K562 (cell line): ENCODE measurements at regions of chr3 and their contacts with region 1.

Region 1: DNA sequence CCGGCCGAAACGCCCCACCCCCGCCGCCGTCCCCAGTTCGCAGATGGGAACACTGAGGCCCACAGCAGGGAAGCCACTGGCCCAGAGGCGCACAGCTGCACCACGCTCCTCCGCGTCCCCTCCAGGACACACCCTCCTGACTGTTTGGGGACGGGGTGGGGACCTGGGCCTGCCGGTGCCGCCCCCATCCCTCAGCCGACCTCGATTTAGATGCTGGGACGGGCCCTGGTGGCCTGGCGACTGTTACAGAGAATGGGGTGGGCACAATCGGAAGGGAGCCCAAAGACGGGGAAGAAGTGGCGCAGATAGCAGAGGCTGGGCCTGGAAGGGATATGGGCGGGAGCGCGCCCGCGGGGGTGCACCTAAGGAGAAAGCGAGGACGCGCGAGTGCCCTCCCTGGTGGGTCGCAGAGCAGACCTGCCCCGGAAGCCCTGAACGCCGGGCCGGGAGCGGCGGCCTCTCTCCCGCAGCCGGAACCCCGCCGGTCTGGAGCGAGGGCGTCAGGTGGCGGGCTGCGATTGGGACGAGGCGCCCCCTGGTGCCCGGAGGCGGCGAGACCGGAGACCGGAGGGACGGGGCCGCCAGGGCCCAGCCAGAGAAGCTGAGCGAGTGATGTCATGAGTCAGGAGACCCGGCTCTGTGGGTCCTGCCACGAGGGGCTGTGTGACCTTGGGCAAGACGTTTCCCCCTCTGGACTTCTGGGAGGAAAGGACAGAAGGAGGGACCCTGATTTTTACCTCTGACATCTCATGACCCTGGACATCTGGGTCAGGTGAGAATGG is 78.4 kb downstream of the IQSEC1 start:
- DNase-seq: peak; percentile 94 to 97 (median 96)
- ATAC-seq: peak; percentile 83
- H3K4me3 ChIP-seq: peak overlapping the region; percentile 73
- H3K27ac ChIP-seq: peak overlapping the region; percentile 81
- H3K4me1 ChIP-seq: peaks cover 37 to 60% of the 10 kb centered on the region in 2 experiments
- H3K27me3 ChIP-seq: no peaks in the 10 kb centered on the region
- CTCF ChIP-seq: peak; percentile 92 to 97 (median 97)
- EP300 ChIP-seq: peak; percentile 65
- POLR2A ChIP-seq: peak; percentile 84
- RAD21 ChIP-seq: peak; percentile 74 to 88

Region 2: DNA sequence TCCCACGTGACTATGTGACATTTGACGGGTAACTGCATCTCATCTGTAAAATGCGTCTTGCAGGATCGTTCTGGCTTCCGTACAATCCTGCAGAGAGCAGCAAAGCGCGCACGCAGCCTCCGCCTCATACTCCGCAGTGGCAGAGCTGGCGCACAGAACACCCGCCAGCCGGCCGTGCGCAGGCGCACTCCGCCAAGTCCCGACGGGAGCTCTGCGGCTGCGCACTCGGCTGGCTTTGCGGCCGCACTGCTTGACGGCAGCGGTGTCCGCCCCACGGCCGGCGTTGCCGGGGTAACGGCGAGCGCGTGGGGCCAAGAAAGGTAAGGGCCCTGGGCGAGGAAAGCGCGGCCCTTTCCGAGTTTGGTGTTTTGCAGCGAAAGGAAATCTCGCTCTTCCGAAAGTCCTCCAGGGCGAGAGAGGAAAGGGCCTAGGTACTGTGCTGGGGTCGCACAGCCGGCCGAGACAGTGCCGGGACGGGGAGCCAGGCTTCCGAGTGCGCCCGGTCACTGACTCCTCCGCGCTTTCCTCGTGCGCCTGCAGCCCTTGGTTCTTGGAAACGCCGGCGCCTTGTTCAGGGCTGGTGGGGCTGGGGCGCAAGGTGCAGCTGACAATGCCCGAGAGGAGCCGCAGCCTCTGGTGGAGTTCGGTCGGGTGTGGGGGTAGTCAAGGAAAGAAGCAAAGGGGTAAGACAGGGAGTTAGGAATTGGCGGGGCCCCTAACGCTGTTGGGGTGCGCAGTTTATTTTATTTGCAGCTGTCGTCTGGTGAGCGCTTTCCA is 510.4 kb before region 1 on chr3 and contains the start of gene TSEN2:
- CTCF ChIA-PET with region 1: no interaction called
- POLR2A ChIA-PET with region 1: no interaction called
- in situ Hi-C with region 1: no loop called
- intact Hi-C with region 1: loop called (anchors 10 kb)
- DNase-seq: peak; percentile 98 to 100 (median 100)
- ATAC-seq: peak; percentile 96
- H3K4me3 ChIP-seq: peak within 1 kb of the TSS; percentile 82
- H3K27ac ChIP-seq: peak within 1 kb of the TSS; percentile 84
- H3K4me1 ChIP-seq: peaks cover 19 to 22% of the 10 kb centered on the region in 2 experiments
- H3K27me3 ChIP-seq: peaks cover 0 to 5% of the 10 kb centered on the region in 2 experiments; a peak in 2 of 5 replicates
- CTCF ChIP-seq: peak; percentile 46 to 57 (median 55)
- EP300 ChIP-seq: peak; percentile 6; the same call in 1 of the 2 replicates
- POLR2A ChIP-seq: peak; percentile 94
- RAD21 ChIP-seq: peak in 1 of 2 experiments; percentile 62; a peak in 3 of 4 replicates
- polyA plus RNA-seq, gene TSEN2: 39.3 to 76.3 TPM

Region 3: GRCh38 chr3:12508291-12508700 is 486.5 kb before region 1 on chr3:
- CTCF ChIA-PET with region 1: no interaction called
- POLR2A ChIA-PET with region 1: no interaction called
- in situ Hi-C with region 1: no loop called
- intact Hi-C with region 1: no loop called
- DNase-seq: no peak
- ATAC-seq: no peak
- H3K4me3 ChIP-seq: no peak overlapping the region
- H3K27ac ChIP-seq: no peak overlapping the region
- H3K4me1 ChIP-seq: no peaks in the 10 kb centered on the region; a peak in 1 of 5 replicates
- H3K27me3 ChIP-seq: no peaks in the 10 kb centered on the region
- CTCF ChIP-seq: no peak
- EP300 ChIP-seq: no peak
- POLR2A ChIP-seq: no peak
- RAD21 ChIP-seq: no peak

Region 4: GRCh38 chr3:12706504-12707253 is 288.1 kb before region 1 on chr3:
- CTCF ChIA-PET with region 1: no interaction called
- POLR2A ChIA-PET with region 1: no interaction called
- in situ Hi-C with region 1: no loop called
- intact Hi-C with region 1: loop called (anchors 10 kb)
- DNase-seq: peak; percentile 73 to 87 (median 80)
- ATAC-seq: peak; percentile 99
- H3K4me3 ChIP-seq: no peak overlapping the region
- H3K27ac ChIP-seq: no peak overlapping the region
- H3K4me1 ChIP-seq: no peaks in the 10 kb centered on the region
- H3K27me3 ChIP-seq: peaks cover 14 to 33% of the 10 kb centered on the region in 2 experiments
- CTCF ChIP-seq: peak; percentile 95 to 99 (median 99)
- EP300 ChIP-seq: no peak
- POLR2A ChIP-seq: no peak
- RAD21 ChIP-seq: peak; percentile 73 to 95

Region 5: GRCh38 chr3:12719984-12720898 is 274.6 kb before region 1 on chr3:
- CTCF ChIA-PET with region 1: no interaction called
- POLR2A ChIA-PET with region 1: no interaction called
- in situ Hi-C with region 1: no loop called
- intact Hi-C with region 1: no loop called
- DNase-seq: peak; percentile 86 to 89 (median 87)
- ATAC-seq: peak; percentile 89
- H3K4me3 ChIP-seq: no peak overlapping the region
- H3K27ac ChIP-seq: no peak overlapping the region
- H3K4me1 ChIP-seq: peaks cover 0 to 10% of the 10 kb centered on the region in 2 experiments; a peak in 3 of 5 replicates
- H3K27me3 ChIP-seq: no peaks in the 10 kb centered on the region; a peak in 1 of 5 replicates
- CTCF ChIP-seq: peak; percentile 90 to 99 (median 99)
- EP300 ChIP-seq: peak; percentile 48; the same call in 1 of the 2 replicates
- POLR2A ChIP-seq: no peak
- RAD21 ChIP-seq: peak; percentile 71 to 85

Region 6: GRCh38 chr3:12796171-12797123 is 198.4 kb before region 1 on chr3 and contains the start of gene CAND2:
- CTCF ChIA-PET with region 1: no interaction called
- POLR2A ChIA-PET with region 1: no interaction called
- in situ Hi-C with region 1: no loop called
- intact Hi-C with region 1: loop called (anchors 10 kb)
- DNase-seq: peak; percentile 78 to 87 (median 84)
- ATAC-seq: peak; percentile 96
- H3K4me3 ChIP-seq: peak within 1 kb of the TSS; percentile 73
- H3K27ac ChIP-seq: peak within 1 kb of the TSS; percentile 77
- H3K4me1 ChIP-seq: peaks cover 8 to 25% of the 10 kb centered on the region in 2 experiments; a peak in 3 of 5 replicates
- H3K27me3 ChIP-seq: no peaks in the 10 kb centered on the region
- CTCF ChIP-seq: no peak
- EP300 ChIP-seq: no peak
- POLR2A ChIP-seq: peak; percentile 82
- RAD21 ChIP-seq: no peak
- polyA plus RNA-seq, gene CAND2: 0.91 to 1.4 TPM

Region 7: DNA sequence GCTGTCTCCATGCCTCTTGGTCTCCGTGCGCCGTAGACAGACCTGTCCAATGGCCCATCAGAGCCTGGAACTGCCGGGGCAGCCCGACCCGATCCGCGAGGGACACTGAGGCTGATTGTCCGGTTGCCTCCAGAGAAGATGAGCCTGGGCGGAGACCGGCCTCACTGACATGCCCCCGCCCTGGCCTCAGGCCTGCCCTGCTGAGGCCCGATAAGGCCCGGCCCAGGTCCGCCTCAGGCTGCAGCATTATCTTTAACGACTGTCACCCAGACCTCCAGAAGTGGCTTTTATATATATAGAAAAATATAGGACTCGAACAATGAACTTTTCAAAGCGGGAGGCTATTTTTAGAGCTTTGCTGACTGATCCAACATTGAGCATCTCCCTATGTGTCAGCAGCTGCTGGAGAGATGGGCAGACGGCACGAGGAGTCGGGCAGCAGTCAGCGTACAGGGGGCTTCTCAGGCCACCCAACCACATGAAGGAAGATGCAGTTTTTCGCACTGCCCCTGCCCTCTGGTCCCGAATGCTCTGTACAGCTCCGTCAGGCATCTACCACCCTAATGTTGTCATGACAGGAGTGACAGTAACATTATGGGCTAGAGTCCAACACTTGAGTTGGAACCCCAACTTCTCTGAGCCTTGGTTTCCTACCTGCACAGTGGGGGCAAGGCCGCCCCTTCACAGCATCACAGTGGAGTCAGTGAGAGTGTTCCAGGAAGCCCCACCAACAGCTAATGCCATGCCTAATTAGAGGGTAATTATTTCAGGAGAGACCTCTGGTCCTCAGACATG is 41.4 kb before region 1 on chr3:
- CTCF ChIA-PET with region 1: no interaction called
- POLR2A ChIA-PET with region 1: interaction called, 4 read pairs
- in situ Hi-C with region 1: no loop called
- intact Hi-C with region 1: loop called (anchors 1 kb)
- DNase-seq: peak; percentile 95 to 99 (median 96)
- ATAC-seq: peak; percentile 94
- H3K4me3 ChIP-seq: peak overlapping the region; percentile 24
- H3K27ac ChIP-seq: peak overlapping the region; percentile 90
- H3K4me1 ChIP-seq: peaks cover 72 to 88% of the 10 kb centered on the region in 2 experiments
- H3K27me3 ChIP-seq: no peaks in the 10 kb centered on the region
- CTCF ChIP-seq: no peak
- EP300 ChIP-seq: peak; percentile 95
- POLR2A ChIP-seq: peak; percentile 73; the same call in 1 of the 2 replicates
- RAD21 ChIP-seq: no peak

Region 8: GRCh38 chr3:13012228-13012691 is 17.5 kb after region 1 on chr3:
- CTCF ChIA-PET with region 1: no interaction called
- POLR2A ChIA-PET with region 1: interaction called, 9 read pairs
- in situ Hi-C with region 1: no loop called
- intact Hi-C with region 1: loop called (anchors 2 kb)
- DNase-seq: no peak
- ATAC-seq: 0 out of 3 replicates have a peak, but pooled peaks have one; percentile 3
- H3K4me3 ChIP-seq: no peak overlapping the region
- H3K27ac ChIP-seq: no peak overlapping the region
- H3K4me1 ChIP-seq: peaks cover 82% of the 10 kb centered on the region in 2 experiments
- H3K27me3 ChIP-seq: no peaks in the 10 kb centered on the region
- CTCF ChIP-seq: no peak
- EP300 ChIP-seq: no peak
- POLR2A ChIP-seq: no peak
- RAD21 ChIP-seq: no peak